Calu3 (cell line): ENCODE measurements at regions of chrX and their contacts with region 1.

Region 1: DNA sequence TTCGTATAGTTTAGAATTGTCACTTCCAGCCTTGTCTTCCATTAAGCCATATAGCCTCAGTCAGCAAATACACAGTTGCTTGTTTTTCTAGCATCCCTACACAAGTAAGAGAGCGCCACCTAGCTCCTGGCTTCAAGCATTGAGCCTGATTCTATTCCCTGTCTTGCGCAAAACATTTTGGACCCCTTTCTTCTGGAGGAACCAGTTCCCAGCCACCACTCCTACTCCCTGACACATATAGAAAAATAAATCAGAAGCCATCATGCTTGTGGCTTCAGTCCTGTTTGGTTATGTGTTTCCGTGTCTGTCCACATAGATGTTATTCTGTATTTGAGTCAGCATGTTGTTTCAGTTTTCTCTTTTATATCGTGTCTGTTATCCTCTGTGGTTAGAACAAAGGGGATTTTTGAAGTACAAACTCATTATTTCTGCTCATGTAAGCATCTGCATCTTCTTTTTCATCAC is 59.9 kb downstream of the GK start:
- DNase-seq: peak; percentile 70
- H3K4me3 Mint-ChIP-seq: no peak overlapping the region
- H3K27ac Mint-ChIP-seq: no peak overlapping the region
- H3K4me1 Mint-ChIP-seq: no peaks in the 10 kb centered on the region
- H3K27me3 Mint-ChIP-seq: no peaks in the 10 kb centered on the region
- CTCF ChIP-seq: peak; percentile 42

Region 2: DNA sequence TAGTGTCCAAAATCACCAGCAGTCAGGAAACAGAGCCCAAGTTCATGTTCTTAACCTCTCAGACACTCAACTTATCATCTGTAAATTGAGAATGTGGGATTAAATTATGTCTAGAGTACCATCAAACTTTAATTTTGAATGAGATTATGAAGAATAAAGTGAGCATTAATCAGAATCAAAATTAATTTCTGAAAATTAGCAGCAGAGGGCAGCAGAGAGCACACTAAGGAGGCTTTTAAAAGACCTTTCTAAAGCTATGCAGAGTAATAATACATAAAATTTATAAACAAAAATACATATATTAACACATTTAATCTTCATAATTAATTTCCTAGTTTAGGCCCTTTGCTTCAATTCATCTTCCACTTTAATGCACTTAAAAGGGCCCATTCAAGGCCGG is 142.6 kb before region 1 on chrX:
- CTCF ChIA-PET with region 1: no interaction called
- intact Hi-C with region 1: loop called (anchors 2 kb)
- DNase-seq: peak; percentile 8
- H3K4me3 Mint-ChIP-seq: no peak overlapping the region
- H3K27ac Mint-ChIP-seq: peak overlapping the region; percentile 47
- H3K4me1 Mint-ChIP-seq: peaks cover 25% of the 10 kb centered on the region
- H3K27me3 Mint-ChIP-seq: no peaks in the 10 kb centered on the region
- CTCF ChIP-seq: peak; percentile 39

Region 3: GRCh38 chrX:30635630-30636029 is 77.5 kb before region 1 on chrX:
- CTCF ChIA-PET with region 1: no interaction called
- intact Hi-C with region 1: loop called (anchors 1 kb)
- DNase-seq: peak; percentile 12
- H3K4me3 Mint-ChIP-seq: no peak overlapping the region
- H3K27ac Mint-ChIP-seq: no peak overlapping the region
- H3K4me1 Mint-ChIP-seq: no peaks in the 10 kb centered on the region
- H3K27me3 Mint-ChIP-seq: no peaks in the 10 kb centered on the region
- CTCF ChIP-seq: no peak